ENCODE measurements at regions of chr12 and their contacts with region 1.

Region 1: GRCh38 chr12:6662906-6663742 is at the start of gene ING4:
- DNase-seq: peak; percentile 96
- H3K4me3 Mint-ChIP-seq: peak within 1 kb of the TSS; percentile 89
- H3K27ac Mint-ChIP-seq: peak within 1 kb of the TSS; percentile 91
- H3K4me1 Mint-ChIP-seq: peaks cover 17% of the 10 kb centered on the region
- H3K27me3 Mint-ChIP-seq: no peaks in the 10 kb centered on the region
- total RNA-seq, gene ING4: 18.5 and 19.1 TPM in 2 replicates

Region 2: GRCh38 chr12:6493497-6494257 is 169.4 kb before region 1 on chr12 and contains the start of gene NCAPD2:
- intact Hi-C with region 1: loop called (anchors 1 kb)
- DNase-seq: peak; percentile 97
- H3K4me3 Mint-ChIP-seq: peak within 1 kb of the TSS; percentile 93
- H3K27ac Mint-ChIP-seq: peak within 1 kb of the TSS; percentile 97
- H3K4me1 Mint-ChIP-seq: peaks cover 29% of the 10 kb centered on the region
- H3K27me3 Mint-ChIP-seq: no peaks in the 10 kb centered on the region
- total RNA-seq, gene NCAPD2: 114 and 120 TPM in 2 replicates

Region 3: GRCh38 chr12:6635856-6636531 is 27.1 kb before region 1 on chr12 and contains the start of gene LPAR5:
- intact Hi-C with region 1: loop called (anchors 1 kb)
- DNase-seq: no peak
- H3K4me3 Mint-ChIP-seq: peak within 1 kb of the TSS; percentile 61
- H3K27ac Mint-ChIP-seq: peak within 1 kb of the TSS; percentile 82
- H3K4me1 Mint-ChIP-seq: peaks cover 42% of the 10 kb centered on the region
- H3K27me3 Mint-ChIP-seq: peaks cover under 1% of the 10 kb centered on the region
- total RNA-seq, gene LPAR5: 3.6 and 4.1 TPM in 2 replicates

Region 4: DNA sequence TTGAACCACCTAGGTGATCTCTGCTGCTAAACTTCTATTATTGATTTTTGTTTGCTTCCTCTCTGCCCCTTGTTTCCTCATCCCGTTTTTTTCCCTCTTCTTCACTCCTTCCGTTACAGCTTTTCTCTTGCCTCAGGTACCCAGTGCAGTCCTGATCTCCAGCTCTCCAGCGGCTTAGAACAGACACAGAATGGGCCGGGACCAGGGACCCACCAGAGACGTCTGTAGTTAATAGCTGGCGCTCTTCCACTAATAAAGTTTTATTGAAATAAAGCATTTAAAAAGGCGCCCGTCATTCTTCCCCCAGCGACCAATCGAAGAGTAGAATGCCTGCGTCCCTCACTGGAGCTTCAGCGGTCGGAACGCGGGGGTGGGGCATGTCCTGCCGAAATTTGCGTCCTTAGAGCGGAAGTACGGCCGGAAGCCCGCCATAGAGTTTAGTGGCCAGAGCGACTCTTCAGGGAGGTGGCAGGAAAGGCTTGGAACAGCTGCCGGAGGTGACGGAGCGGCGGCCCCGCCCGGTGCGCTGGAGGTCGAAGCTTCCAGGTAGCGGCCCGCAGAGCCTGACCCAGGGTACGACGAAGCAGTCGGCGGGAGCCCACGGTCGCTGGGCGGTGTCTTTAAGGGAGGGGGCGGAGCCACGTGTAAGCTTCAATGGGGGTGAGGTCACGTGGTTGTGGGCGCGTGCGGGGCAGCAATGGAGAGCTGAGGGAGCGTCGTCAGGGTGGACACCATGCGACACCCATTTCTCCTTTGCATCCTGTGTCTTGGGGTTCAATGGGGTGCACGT is 60.7 kb after region 1 on chr12 and contains the start of gene COPS7A:
- intact Hi-C with region 1: loop called (anchors 1 kb)
- DNase-seq: peak; percentile 98
- H3K4me3 Mint-ChIP-seq: peak within 1 kb of the TSS; percentile 99
- H3K27ac Mint-ChIP-seq: peak within 1 kb of the TSS; percentile 98
- H3K4me1 Mint-ChIP-seq: peaks cover 17% of the 10 kb centered on the region
- H3K27me3 Mint-ChIP-seq: no peaks in the 10 kb centered on the region
- total RNA-seq, gene COPS7A: 33.0 and 35.6 TPM in 2 replicates

Region 5: DNA sequence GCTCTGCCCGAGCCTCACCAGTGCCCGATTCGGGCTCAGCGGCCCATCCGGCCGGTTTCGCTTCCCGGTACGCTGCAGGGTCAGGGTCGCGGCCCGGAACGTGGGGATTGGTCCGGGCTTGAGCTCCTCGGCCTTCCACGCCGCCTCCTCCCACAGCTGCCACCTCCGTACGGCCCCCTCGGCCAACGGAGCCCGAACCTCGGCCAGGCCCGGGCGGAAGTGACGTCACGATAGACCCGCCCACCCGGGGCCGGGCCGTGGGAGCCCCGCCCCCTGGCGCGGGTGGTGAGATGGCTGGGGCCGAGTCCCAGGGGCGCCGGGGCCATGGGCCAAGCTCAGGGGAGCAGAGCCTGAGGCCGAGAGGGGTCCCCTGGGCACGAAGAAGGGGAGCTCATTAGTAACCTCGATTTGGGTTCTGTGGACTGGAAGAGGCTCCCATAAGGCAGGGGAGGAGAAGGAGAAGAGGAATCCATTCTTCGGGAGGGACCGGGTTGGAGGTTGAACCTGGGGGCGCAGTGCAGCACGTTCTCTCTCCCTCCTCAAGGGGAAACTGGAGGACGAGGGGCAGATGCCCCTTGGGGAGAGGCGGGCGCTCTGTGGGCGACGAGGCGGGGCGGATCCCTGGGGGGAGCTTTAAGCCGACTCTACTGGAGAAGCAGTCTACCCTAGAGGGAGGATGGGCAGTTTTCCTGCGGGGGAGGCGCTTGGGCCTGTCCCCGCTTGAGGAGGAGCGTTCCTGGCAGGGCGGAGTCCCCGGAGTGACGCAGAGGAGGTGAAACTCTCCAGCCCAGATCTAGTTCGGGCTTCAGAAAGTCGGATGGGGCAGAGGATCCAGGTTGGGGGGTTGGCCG is 90.0 kb after region 1 on chr12 and contains the start of gene MLF2:
- intact Hi-C with region 1: loop called (anchors 1 kb)
- DNase-seq: peak; percentile 97
- H3K4me3 Mint-ChIP-seq: peak within 1 kb of the TSS; percentile 94
- H3K27ac Mint-ChIP-seq: peak within 1 kb of the TSS; percentile 96
- H3K4me1 Mint-ChIP-seq: peaks cover 32% of the 10 kb centered on the region
- H3K27me3 Mint-ChIP-seq: no peaks in the 10 kb centered on the region
- total RNA-seq, gene MLF2: 162 and 172 TPM in 2 replicates